GM12878 (cell line): ENCODE measurements at regions of chr5 and their contacts with region 1.

Region 1: DNA sequence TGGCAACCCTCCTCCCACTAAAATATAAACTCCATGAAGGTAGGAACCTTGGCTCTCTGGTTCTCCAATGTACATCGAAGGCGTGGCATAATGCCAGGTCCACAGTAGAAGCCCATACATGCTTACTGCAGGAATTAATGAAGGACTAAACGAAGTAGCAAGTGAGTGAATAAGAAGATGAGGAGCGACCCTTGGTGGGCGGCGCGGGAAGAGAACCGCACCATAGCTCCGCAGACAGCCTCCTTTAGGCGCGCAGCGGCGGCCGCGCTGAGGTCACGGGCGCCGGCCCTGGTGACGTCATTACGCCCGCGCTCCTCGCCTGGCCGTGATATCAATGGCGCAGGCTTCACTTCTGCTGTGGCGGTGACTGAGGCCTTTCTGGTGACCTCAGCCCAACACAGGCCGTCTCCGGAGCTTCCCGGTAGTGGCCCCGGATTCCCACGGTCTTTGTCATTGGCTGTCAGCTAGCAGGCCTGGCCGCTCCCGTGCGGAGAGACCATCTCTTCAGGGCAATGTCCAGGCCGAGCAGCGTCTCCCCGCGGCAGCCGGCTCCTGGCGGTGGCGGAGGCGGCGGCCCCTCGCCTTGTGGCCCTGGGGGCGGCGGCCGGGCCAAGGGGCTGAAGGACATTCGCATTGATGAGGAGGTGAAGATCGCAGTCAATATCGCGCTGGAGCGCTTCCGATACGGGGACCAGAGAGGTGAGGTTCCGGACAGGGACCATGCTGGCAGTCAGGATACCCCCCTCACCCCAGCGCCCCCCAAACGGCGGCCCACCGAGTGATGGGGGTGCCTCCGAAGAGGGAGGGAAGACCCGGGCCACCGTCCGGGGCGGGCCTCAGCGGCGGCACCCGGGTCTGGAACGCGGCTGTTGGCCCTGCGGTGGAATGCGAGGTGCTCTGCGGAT is at the start of gene YTHDC2:
- DNase-seq: peak; percentile 42
- ATAC-seq: peak; percentile 91
- H3K4me3 ChIP-seq: peak within 1 kb of the TSS; percentile 74
- H3K27ac ChIP-seq: peak within 1 kb of the TSS; percentile 81
- H3K4me1 ChIP-seq: peaks cover 3% of the 10 kb centered on the region
- H3K27me3 ChIP-seq: no peaks in the 10 kb centered on the region
- CTCF ChIP-seq: peak in 2 of 3 experiments; percentile 14 to 25; a peak in 3 of 6 replicates
- EP300 ChIP-seq: no peak
- POLR2A ChIP-seq: peak; percentile 98
- RAD21 ChIP-seq: peak; percentile 35; the same call in 1 of the 2 replicates
- polyA plus RNA-seq, gene YTHDC2: 3.8 to 5.7 TPM

Region 2: GRCh38 chr5:112983363-112983762 is 530.3 kb before region 1 on chr5:
- CTCF ChIA-PET with region 1: no interaction called
- POLR2A ChIA-PET with region 1: no interaction called
- RAD21 ChIA-PET with region 1: no interaction called
- SMC1A ChIA-PET with region 1: no interaction called
- in situ Hi-C with region 1: loop called (anchors 5 kb)
- intact Hi-C with region 1: loop called (anchors 5 kb)
- DNase-seq: no peak
- ATAC-seq: no peak
- H3K4me3 ChIP-seq: no peak overlapping the region
- H3K27ac ChIP-seq: no peak overlapping the region
- H3K4me1 ChIP-seq: no peaks in the 10 kb centered on the region
- H3K27me3 ChIP-seq: no peaks in the 10 kb centered on the region
- CTCF ChIP-seq: no peak
- EP300 ChIP-seq: no peak
- POLR2A ChIP-seq: no peak
- RAD21 ChIP-seq: no peak

Region 3: GRCh38 chr5:113330533-113331208 is 183.0 kb before region 1 on chr5:
- CTCF ChIA-PET with region 1: interaction called, 3 read pairs
- POLR2A ChIA-PET with region 1: no interaction called
- RAD21 ChIA-PET with region 1: no interaction called
- SMC1A ChIA-PET with region 1: no interaction called
- in situ Hi-C with region 1: no loop called
- intact Hi-C with region 1: loop called (anchors 2 kb)
- DNase-seq: no peak
- ATAC-seq: peak; percentile 52; the same call in 2 of the 3 replicates
- H3K4me3 ChIP-seq: no peak overlapping the region
- H3K27ac ChIP-seq: no peak overlapping the region
- H3K4me1 ChIP-seq: no peaks in the 10 kb centered on the region
- H3K27me3 ChIP-seq: no peaks in the 10 kb centered on the region
- CTCF ChIP-seq: peak; percentile 27 to 44 (median 34); a peak in 4 of 6 replicates
- EP300 ChIP-seq: no peak
- POLR2A ChIP-seq: no peak
- RAD21 ChIP-seq: peak; percentile 70

Region 4: GRCh38 chr5:113378959-113379541 is 134.6 kb before region 1 on chr5:
- CTCF ChIA-PET with region 1: interaction called, 33 read pairs
- POLR2A ChIA-PET with region 1: no interaction called
- RAD21 ChIA-PET with region 1: interaction called, 10 read pairs
- SMC1A ChIA-PET with region 1: interaction called, 34 read pairs
- in situ Hi-C with region 1: no loop called
- intact Hi-C with region 1: loop called (anchors 1 kb)
- DNase-seq: peak; percentile 9
- ATAC-seq: peak; percentile 84
- H3K4me3 ChIP-seq: no peak overlapping the region
- H3K27ac ChIP-seq: no peak overlapping the region
- H3K4me1 ChIP-seq: no peaks in the 10 kb centered on the region
- H3K27me3 ChIP-seq: no peaks in the 10 kb centered on the region
- CTCF ChIP-seq: peak; percentile 67 to 80 (median 77)
- EP300 ChIP-seq: no peak
- POLR2A ChIP-seq: no peak
- RAD21 ChIP-seq: peak; percentile 76

Region 5: GRCh38 chr5:113524927-113525326 is 11.3 kb after region 1 on chr5:
- CTCF ChIA-PET with region 1: interaction called, 5 read pairs
- POLR2A ChIA-PET with region 1: interaction called, 4 read pairs
- RAD21 ChIA-PET with region 1: interaction called, 10 read pairs
- SMC1A ChIA-PET with region 1: interaction called, 5 read pairs
- in situ Hi-C with region 1: no loop called
- intact Hi-C with region 1: no loop called
- DNase-seq: no peak
- ATAC-seq: peak; percentile 72
- H3K4me3 ChIP-seq: no peak overlapping the region
- H3K27ac ChIP-seq: peak overlapping the region; percentile 52; the same call in 1 of the 2 replicates
- H3K4me1 ChIP-seq: peaks cover 16% of the 10 kb centered on the region
- H3K27me3 ChIP-seq: no peaks in the 10 kb centered on the region
- CTCF ChIP-seq: no peak
- EP300 ChIP-seq: no peak
- POLR2A ChIP-seq: no peak
- RAD21 ChIP-seq: no peak

Region 6: GRCh38 chr5:113581388-113581787 is 67.8 kb after region 1 on chr5:
- CTCF ChIA-PET with region 1: no interaction called
- POLR2A ChIA-PET with region 1: no interaction called
- RAD21 ChIA-PET with region 1: no interaction called
- SMC1A ChIA-PET with region 1: no interaction called
- in situ Hi-C with region 1: no loop called
- intact Hi-C with region 1: no loop called
- DNase-seq: no peak
- ATAC-seq: no peak
- H3K4me3 ChIP-seq: no peak overlapping the region
- H3K27ac ChIP-seq: no peak overlapping the region
- H3K4me1 ChIP-seq: no peaks in the 10 kb centered on the region
- H3K27me3 ChIP-seq: no peaks in the 10 kb centered on the region
- CTCF ChIP-seq: no peak
- EP300 ChIP-seq: no peak
- POLR2A ChIP-seq: no peak
- RAD21 ChIP-seq: no peak